RWPE1 (cell line): ENCODE measurements at regions of chr17 and their contacts with region 1.

Region 1: GRCh38 chr17:45021607-45022287 is 29.7 kb downstream of the DCAKD start:
- DNase-seq: peak; percentile 81
- H3K27ac ChIP-seq: peak overlapping the region; percentile 67
- CTCF ChIP-seq: peak; percentile 97

Region 2: GRCh38 chr17:44919885-44920564 is 101.7 kb before region 1 on chr17:
- CTCF ChIA-PET with region 1: interaction called, 113 read pairs
- POLR2A ChIA-PET with region 1: interaction called, 5 read pairs
- DNase-seq: peak; percentile 81
- H3K27ac ChIP-seq: peak overlapping the region; percentile 60
- CTCF ChIP-seq: peak; percentile 90

Region 3: DNA sequence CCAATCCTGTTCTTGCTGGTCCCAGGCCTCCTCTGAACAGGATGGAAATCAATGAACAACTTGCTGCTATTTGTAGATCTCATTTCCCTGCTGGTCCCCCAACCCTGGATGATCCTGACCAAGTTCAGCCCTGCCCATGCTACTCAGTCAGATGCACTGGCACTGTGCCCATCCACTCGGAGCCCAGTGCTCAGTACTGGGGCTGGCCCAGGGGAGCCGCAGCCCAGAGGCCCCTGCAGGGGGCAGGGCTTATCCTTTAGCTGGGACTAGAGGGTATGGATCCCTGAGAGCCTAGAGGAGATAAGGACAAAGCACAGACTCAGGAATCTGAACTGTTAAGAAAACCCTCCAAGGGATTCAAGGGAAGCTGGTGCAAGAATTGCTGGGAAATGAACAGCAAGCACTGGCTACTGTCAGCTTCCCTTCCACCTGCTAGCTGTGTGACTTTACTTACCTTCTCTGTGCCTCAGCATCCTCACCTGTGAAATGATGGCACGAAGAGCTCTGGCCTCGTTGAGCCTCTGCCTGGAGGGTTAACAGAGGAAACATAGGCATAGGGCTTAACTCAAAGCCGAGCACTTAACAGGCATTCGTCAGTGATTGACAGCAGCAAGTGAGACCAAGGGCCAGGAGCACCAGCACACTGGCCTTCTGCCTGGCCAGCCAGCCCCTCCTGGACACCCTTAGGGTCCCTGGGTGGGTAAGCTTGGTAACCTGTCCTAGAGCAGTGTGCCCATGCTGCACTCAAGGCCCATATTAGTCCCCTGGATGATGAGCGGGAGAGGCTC is 23.8 kb before region 1 on chr17:
- CTCF ChIA-PET with region 1: interaction called, 15 read pairs
- POLR2A ChIA-PET with region 1: no interaction called
- DNase-seq: no peak
- H3K27ac ChIP-seq: no peak overlapping the region; the same call in 1 of the 2 replicates
- CTCF ChIP-seq: no peak

Region 4: DNA sequence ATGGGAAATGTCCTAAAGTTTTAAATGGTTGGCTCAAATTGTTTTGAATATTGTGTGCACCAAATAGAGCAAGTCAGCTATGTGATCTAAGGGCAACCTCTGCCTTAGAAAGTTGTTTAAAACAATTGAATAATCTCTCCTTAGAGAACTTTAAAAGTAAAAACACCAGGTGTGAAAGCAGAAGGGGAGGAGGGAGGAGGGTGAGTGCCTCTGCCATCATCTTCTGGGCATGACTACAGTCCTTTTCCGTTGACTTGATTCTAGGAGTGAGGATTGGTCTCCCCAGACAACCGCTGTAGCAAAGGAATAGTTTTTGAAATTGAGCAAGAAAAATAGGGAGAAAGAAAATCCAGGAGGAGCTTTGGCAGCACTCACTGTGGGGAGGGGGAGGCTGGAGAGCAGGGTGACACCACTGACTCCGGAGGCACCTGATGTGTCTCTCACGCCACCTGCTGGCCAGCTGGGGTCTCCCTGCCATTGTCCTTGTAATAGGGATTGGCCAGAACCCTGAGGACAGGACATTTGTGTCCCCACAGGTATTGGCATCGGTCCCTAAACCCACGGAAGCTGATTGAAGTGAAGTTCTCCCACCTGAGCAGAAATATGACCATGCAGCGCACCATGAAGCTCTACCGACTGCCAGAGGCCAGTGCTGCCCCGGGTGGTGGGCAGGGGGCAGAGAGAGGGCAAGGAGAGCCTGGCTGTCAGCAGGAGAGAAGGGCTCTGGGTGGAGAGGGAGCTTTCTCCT is 77.3 kb after region 1 on chr17:
- CTCF ChIA-PET with region 1: interaction called, 11 read pairs
- POLR2A ChIA-PET with region 1: no interaction called
- DNase-seq: peak; percentile 89
- H3K27ac ChIP-seq: peak overlapping the region; percentile 95
- CTCF ChIP-seq: peak; percentile 96